Activated T-helper 1 cell treated with anti-CD3 and anti-CD28 coated beads, Interleukin-12 subunit alpha, Interleukin-12 subunit beta, Interleukin-2, Interleukin-4 antibody, amounts not matched to agents 30 ng/mL and 10 ng/mL and 1 ng/mL, durations not matched to agents 14 hours and 24 hours and 36 hours (primary cell): ENCODE measurements at regions of chr9 and their contacts with region 1.

Region 1: DNA sequence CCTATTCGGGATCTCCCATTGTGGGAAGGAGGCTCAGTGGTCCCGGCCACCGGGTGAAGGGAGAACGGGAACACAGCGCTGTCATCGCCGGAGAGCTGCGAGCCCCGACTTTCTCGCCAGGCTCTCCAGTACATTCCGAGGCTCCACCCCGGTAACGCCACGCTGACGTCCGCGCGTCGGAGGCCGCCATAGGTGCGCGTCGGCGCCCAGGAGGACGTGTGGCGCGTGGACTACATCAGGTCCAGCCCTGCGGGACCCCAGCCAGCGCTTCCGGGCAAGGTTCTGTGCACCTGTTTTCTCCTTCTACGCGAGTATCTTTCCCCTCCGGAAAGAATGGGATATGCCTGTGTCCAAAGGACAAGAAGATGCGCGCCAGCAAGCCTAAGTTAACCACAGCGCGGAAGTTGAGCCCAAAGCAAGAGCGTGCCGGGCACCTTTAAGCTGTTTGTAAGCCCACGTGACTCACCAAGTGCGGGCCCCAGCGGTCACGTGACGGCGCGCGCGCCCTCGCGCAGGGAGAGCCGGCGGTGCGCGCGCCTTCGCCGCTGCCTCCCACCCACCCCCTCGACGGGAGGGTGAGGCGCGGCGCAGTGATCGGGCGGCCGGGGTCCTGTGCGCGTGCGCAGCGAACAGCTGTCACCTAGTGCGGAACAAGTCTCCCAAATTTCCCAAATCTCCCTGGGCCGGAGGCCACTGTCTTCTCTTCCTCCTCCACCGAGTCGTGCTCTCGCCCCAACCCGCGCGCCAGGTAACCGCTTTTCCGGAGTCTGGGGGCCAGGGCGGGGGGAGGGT is at the start of gene KDM4C:
- DNase-seq: peak; percentile 91
- H3K4me3 Mint-ChIP-seq: peak within 1 kb of the TSS; percentile 99
- H3K27ac Mint-ChIP-seq: peak within 1 kb of the TSS; percentile 99
- H3K4me1 Mint-ChIP-seq: peaks cover 12% of the 10 kb centered on the region
- H3K27me3 Mint-ChIP-seq: no peaks in the 10 kb centered on the region
- total RNA-seq, gene KDM4C: 35.9 and 41.4 TPM in 2 replicates

Region 2: GRCh38 chr9:5832543-5833529 is 924.8 kb before region 1 on chr9 and contains the start of gene ERMP1:
- intact Hi-C with region 1: loop called (anchors 5 kb)
- DNase-seq: peak; percentile 89
- H3K4me3 Mint-ChIP-seq: peak within 1 kb of the TSS; percentile 92
- H3K27ac Mint-ChIP-seq: peak within 1 kb of the TSS; percentile 82
- H3K4me1 Mint-ChIP-seq: peaks cover 62% of the 10 kb centered on the region
- H3K27me3 Mint-ChIP-seq: no peaks in the 10 kb centered on the region
- total RNA-seq, gene ERMP1: 23.1 and 24.1 TPM in 2 replicates

Region 3: DNA sequence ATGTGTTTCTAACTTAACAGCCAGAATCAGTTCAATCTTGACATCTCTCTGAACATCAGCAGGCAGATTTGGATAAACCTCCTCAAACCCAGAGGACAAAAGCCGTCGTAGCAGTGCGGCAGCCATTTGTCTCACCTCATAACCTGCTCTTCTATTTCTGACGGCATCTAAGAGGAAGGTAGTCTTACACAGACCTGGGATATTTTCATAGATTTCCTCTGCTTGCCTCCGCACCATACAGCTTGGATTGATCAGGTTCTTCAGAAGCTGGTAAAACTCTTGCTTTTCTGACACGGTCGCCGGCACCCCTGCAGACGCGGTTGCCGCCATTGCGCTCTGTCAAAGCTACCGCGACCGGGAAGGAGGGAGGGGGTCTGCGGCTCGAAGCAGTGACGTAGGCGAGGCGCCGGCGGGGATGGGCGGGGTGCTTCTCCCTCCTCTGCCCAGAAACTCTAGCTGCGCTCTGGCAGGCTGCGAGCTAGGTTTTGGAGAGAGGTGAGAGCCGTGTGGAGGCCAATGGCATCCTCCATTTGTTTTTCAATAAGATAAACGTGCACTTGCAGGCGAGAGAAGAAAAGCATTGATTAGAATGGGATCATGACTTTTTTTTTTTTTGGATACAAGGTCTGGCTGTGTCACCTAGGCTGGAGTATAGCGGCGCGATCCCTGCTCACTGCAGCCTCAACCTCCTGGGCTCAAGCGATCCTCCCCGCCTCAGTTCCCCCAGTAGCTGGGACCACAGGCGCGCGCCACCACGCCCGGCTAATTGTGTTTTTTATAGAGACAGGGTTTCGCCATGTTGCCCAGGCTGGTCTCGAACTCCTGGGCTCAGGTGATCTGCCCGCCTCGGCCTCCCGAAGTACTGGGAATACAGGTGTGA is 742.1 kb before region 1 on chr9 and contains the start of gene RANBP6:
- intact Hi-C with region 1: no loop called
- DNase-seq: peak; percentile 86
- H3K4me3 Mint-ChIP-seq: peak within 1 kb of the TSS; percentile 96
- H3K27ac Mint-ChIP-seq: peak within 1 kb of the TSS; percentile 97
- H3K4me1 Mint-ChIP-seq: peaks cover 49% of the 10 kb centered on the region
- H3K27me3 Mint-ChIP-seq: no peaks in the 10 kb centered on the region
- total RNA-seq, gene RANBP6: 19.2 and 22.7 TPM in 2 replicates

Region 4: GRCh38 chr9:6412487-6413364 is 344.9 kb before region 1 on chr9 and contains the start of gene UHRF2:
- intact Hi-C with region 1: loop called (anchors 1 kb)
- DNase-seq: peak; percentile 97
- H3K4me3 Mint-ChIP-seq: peak within 1 kb of the TSS; percentile 89
- H3K27ac Mint-ChIP-seq: peak within 1 kb of the TSS; percentile 92
- H3K4me1 Mint-ChIP-seq: peaks cover 27% of the 10 kb centered on the region
- H3K27me3 Mint-ChIP-seq: no peaks in the 10 kb centered on the region
- total RNA-seq, gene UHRF2: 73.0 and 77.3 TPM in 2 replicates

Region 5: DNA sequence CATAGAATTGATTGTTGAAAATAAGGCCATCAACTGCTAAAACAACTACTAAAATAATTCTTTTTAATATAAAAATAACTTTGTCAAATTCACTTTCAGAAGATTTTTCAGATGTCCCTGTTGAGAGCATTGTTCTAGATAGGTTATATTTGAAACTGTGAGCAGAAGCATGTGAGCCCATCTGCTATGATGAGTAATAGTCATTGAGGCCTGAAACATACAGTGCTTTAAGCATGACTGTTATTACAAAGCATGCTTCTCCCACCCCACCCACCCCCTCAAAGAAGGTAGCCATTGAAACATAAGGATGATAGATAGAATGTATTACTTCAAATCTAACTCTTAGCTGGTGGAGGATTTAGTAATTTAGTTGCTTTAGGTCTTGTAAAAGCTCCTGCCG is 258.7 kb before region 1 on chr9:
- intact Hi-C with region 1: no loop called
- DNase-seq: no peak
- H3K4me3 Mint-ChIP-seq: no peak overlapping the region
- H3K27ac Mint-ChIP-seq: peak overlapping the region; percentile 40
- H3K4me1 Mint-ChIP-seq: peaks cover 10% of the 10 kb centered on the region
- H3K27me3 Mint-ChIP-seq: peaks cover 1% of the 10 kb centered on the region

Region 6: GRCh38 chr9:6681147-6681956 is 76.3 kb before region 1 on chr9:
- intact Hi-C with region 1: loop called (anchors 1 kb)
- DNase-seq: peak; percentile 88
- H3K4me3 Mint-ChIP-seq: peak overlapping the region; percentile 94
- H3K27ac Mint-ChIP-seq: peak overlapping the region; percentile 99
- H3K4me1 Mint-ChIP-seq: peaks cover 24% of the 10 kb centered on the region
- H3K27me3 Mint-ChIP-seq: peaks cover 3% of the 10 kb centered on the region

Region 7: GRCh38 chr9:6805532-6805931 is 47.9 kb after region 1 on chr9:
- intact Hi-C with region 1: no loop called
- DNase-seq: no peak
- H3K4me3 Mint-ChIP-seq: no peak overlapping the region
- H3K27ac Mint-ChIP-seq: no peak overlapping the region
- H3K4me1 Mint-ChIP-seq: no peaks in the 10 kb centered on the region
- H3K27me3 Mint-ChIP-seq: no peaks in the 10 kb centered on the region

Region 8: DNA sequence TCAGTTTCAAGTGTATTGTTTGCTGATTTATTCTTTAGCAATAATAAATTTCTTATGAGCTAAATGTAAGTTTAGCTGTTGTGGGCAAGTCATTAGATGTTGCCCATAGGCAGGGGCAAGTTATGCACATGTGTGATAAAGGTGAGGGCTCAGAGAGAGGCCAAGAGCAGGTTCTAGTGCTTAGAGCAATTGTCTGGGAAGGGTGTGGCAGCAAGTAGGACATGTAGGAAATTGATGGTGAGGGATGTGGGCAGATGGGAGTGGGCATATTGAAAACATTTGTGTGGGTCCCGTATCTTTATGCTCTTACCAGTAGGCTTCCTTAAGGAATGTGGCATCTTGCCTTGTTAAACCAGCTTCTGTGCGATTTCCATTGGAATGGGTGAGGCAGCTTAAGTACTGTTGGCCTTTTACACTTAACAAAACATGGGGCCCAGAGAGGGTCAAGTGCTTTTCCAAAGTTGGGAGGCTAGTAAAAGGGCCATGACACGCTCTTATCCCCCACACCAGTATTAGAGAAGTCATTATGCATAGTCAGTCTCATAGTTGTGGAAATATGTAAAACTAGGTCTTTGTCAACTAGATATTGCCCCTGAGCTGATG is 60.8 kb after region 1 on chr9:
- intact Hi-C with region 1: loop called (anchors 5 kb)
- DNase-seq: no peak
- H3K4me3 Mint-ChIP-seq: no peak overlapping the region
- H3K27ac Mint-ChIP-seq: no peak overlapping the region
- H3K4me1 Mint-ChIP-seq: peaks cover 17% of the 10 kb centered on the region
- H3K27me3 Mint-ChIP-seq: no peaks in the 10 kb centered on the region

Region 9: GRCh38 chr9:7976167-7976755 is 1218.6 kb after region 1 on chr9:
- intact Hi-C with region 1: loop called (anchors 2 kb)
- DNase-seq: peak; percentile 68
- H3K4me3 Mint-ChIP-seq: peak overlapping the region; percentile 15
- H3K27ac Mint-ChIP-seq: peak overlapping the region; percentile 73
- H3K4me1 Mint-ChIP-seq: peaks cover 63% of the 10 kb centered on the region
- H3K27me3 Mint-ChIP-seq: no peaks in the 10 kb centered on the region